ENCODE measurements at regions of chr10 and their contacts with region 1.

Region 1: GRCh38 chr10:89029785-89030437 is 39.3 kb downstream of the FAS start:
- DNase-seq: peak; percentile 24
- ATAC-seq: peak; percentile 70
- H3K4me3 ChIP-seq: no peak overlapping the region
- H3K27ac ChIP-seq: no peak overlapping the region
- H3K4me1 ChIP-seq: peaks cover 26% of the 10 kb centered on the region
- H3K27me3 ChIP-seq: no peaks in the 10 kb centered on the region
- CTCF ChIP-seq: peak; percentile 76 to 90 (median 82)
- EP300 ChIP-seq: no peak
- POLR2A ChIP-seq: no peak
- RAD21 ChIP-seq: peak; percentile 86

Region 2: DNA sequence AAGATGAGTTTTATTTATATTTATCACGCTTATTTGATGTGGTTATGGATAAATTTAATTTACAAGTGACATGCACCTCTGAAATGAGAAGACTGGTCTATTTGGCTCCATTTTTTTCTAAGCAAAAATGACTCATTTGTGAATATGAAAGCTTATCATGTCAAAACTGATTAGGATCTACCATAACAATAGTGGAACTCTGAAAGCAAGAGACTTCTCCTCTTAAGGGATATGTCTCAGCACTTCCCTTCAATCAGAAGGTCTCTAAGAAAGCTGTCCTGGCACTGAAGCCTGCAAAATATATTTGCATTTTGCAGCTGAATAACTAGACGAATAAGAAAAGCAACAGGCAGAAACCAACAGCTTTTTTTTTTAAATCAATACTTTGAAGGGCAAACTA is 26.6 kb before region 1 on chr10:
- CTCF ChIA-PET with region 1: interaction called, 17 read pairs
- POLR2A ChIA-PET with region 1: interaction called, 3 read pairs
- RAD21 ChIA-PET with region 1: no interaction called
- SMC1A ChIA-PET with region 1: interaction called, 8 read pairs
- in situ Hi-C with region 1: no loop called
- intact Hi-C with region 1: no loop called
- DNase-seq: no peak
- ATAC-seq: peak; percentile 22
- H3K4me3 ChIP-seq: no peak overlapping the region
- H3K27ac ChIP-seq: no peak overlapping the region; the same call in 1 of the 2 replicates
- H3K4me1 ChIP-seq: peaks cover 35% of the 10 kb centered on the region
- H3K27me3 ChIP-seq: no peaks in the 10 kb centered on the region
- CTCF ChIP-seq: no peak
- EP300 ChIP-seq: no peak
- POLR2A ChIP-seq: no peak
- RAD21 ChIP-seq: no peak

Region 3: GRCh38 chr10:89086801-89087521 is 57.0 kb after region 1 on chr10:
- CTCF ChIA-PET with region 1: interaction called, 14 read pairs
- POLR2A ChIA-PET with region 1: no interaction called
- RAD21 ChIA-PET with region 1: interaction called, 4 read pairs
- SMC1A ChIA-PET with region 1: interaction called, 4 read pairs
- in situ Hi-C with region 1: no loop called
- intact Hi-C with region 1: loop called (anchors 5 kb)
- DNase-seq: no peak
- ATAC-seq: no peak
- H3K4me3 ChIP-seq: no peak overlapping the region
- H3K27ac ChIP-seq: no peak overlapping the region
- H3K4me1 ChIP-seq: peaks cover 7% of the 10 kb centered on the region; the same call in 1 of the 2 replicates
- H3K27me3 ChIP-seq: no peaks in the 10 kb centered on the region
- CTCF ChIP-seq: no peak
- EP300 ChIP-seq: no peak
- POLR2A ChIP-seq: no peak
- RAD21 ChIP-seq: no peak

Region 4: DNA sequence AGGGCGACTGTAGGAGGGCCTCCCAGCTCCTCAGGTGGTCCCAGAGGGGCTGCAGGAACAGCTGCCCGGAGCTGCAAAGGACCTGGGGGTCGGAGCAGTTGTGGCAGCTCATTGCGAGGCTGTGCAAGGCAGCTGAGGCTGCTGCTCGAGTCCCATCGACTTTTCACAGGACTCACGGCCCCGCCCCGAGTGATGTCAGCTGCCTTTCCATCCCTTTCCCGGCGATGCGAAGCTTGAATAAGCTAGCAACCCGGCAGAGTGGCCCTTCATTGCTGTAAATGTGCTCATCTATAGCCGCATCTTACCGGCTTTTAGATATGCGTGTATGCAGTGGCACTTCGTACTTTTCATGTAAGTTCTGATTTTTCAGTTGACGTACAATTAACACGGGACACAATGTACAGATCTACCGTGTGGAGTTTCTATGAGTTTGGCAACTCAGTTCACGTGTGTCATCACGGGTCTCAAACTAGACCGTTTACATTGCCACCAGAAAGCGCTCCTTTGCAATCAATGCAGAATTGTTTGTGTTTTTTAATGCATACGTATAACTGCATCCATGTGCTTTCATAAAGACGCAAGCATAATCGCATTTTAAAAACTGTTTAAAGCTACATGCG is 177.4 kb after region 1 on chr10 and contains the start of gene CH25H:
- CTCF ChIA-PET with region 1: interaction called, 44 read pairs
- POLR2A ChIA-PET with region 1: no interaction called
- RAD21 ChIA-PET with region 1: interaction called, 46 read pairs
- SMC1A ChIA-PET with region 1: interaction called, 72 read pairs
- in situ Hi-C with region 1: loop called (anchors 5 kb)
- intact Hi-C with region 1: loop called (anchors 1 kb)
- DNase-seq: no peak
- ATAC-seq: peak; percentile 59
- H3K4me3 ChIP-seq: peak within 1 kb of the TSS; percentile 66
- H3K27ac ChIP-seq: no peak within 1 kb of the TSS
- H3K4me1 ChIP-seq: peaks cover 24% of the 10 kb centered on the region
- H3K27me3 ChIP-seq: peaks cover 6 to 22% of the 10 kb centered on the region in 2 experiments
- CTCF ChIP-seq: no peak
- EP300 ChIP-seq: no peak
- POLR2A ChIP-seq: no peak
- RAD21 ChIP-seq: no peak
- polyA plus RNA-seq, gene CH25H: not detected

Region 5: DNA sequence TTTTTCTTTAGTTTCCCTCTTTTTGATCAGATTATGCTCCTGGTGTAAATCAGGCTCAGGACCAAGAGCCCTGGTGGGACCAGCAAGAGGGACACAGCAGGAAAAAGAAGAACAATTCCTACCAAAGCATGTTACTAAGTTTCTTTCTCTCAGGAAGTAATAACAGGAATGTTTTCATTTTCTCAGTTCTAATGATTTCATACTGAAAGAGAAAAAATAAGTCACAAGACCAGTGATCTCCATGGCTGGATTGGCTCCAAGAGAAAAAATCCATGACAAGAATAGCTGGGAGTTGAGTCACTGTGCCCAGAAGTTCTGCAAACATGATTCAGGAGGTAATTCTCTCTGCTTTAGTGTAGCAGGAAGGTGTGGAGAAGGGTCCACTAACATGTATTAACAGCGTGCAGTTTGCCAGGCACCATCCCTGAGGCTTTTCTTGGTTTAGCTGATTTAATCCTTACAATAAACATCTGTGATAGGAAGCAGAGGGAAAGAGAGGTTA is 248.2 kb after region 1 on chr10:
- CTCF ChIA-PET with region 1: no interaction called
- POLR2A ChIA-PET with region 1: no interaction called
- RAD21 ChIA-PET with region 1: no interaction called
- SMC1A ChIA-PET with region 1: no interaction called
- in situ Hi-C with region 1: no loop called
- intact Hi-C with region 1: no loop called
- DNase-seq: no peak
- ATAC-seq: no peak
- H3K4me3 ChIP-seq: no peak overlapping the region
- H3K27ac ChIP-seq: no peak overlapping the region
- H3K4me1 ChIP-seq: no peaks in the 10 kb centered on the region
- H3K27me3 ChIP-seq: no peaks in the 10 kb centered on the region
- CTCF ChIP-seq: no peak
- EP300 ChIP-seq: no peak
- POLR2A ChIP-seq: no peak
- RAD21 ChIP-seq: no peak

Region 6: GRCh38 chr10:89327784-89328441 is 298.0 kb after region 1 on chr10 and contains the start of gene IFIT3:
- CTCF ChIA-PET with region 1: no interaction called
- POLR2A ChIA-PET with region 1: no interaction called
- RAD21 ChIA-PET with region 1: no interaction called
- SMC1A ChIA-PET with region 1: no interaction called
- in situ Hi-C with region 1: no loop called
- intact Hi-C with region 1: no loop called
- DNase-seq: peak; percentile 62
- ATAC-seq: peak; percentile 33
- H3K4me3 ChIP-seq: peak within 1 kb of the TSS; percentile 51
- H3K27ac ChIP-seq: peak within 1 kb of the TSS; percentile 60
- H3K4me1 ChIP-seq: peaks cover 22% of the 10 kb centered on the region
- H3K27me3 ChIP-seq: no peaks in the 10 kb centered on the region
- CTCF ChIP-seq: no peak
- EP300 ChIP-seq: no peak
- POLR2A ChIP-seq: peak; percentile 63
- RAD21 ChIP-seq: no peak
- polyA plus RNA-seq, gene IFIT3: 27.0 to 50.4 TPM

Measured in GM12878 (cell line).